Left cardiac atrium (tissue), 4 donors: ENCODE measurements at regions of chr16 and their contacts with region 1.

Region 1: GRCh38 chr16:57300387-57301125 is 16.1 kb upstream of the PLLP start:
- DNase-seq: peak; percentile 99
- ATAC-seq: peak; percentile 92 to 94

Region 2: DNA sequence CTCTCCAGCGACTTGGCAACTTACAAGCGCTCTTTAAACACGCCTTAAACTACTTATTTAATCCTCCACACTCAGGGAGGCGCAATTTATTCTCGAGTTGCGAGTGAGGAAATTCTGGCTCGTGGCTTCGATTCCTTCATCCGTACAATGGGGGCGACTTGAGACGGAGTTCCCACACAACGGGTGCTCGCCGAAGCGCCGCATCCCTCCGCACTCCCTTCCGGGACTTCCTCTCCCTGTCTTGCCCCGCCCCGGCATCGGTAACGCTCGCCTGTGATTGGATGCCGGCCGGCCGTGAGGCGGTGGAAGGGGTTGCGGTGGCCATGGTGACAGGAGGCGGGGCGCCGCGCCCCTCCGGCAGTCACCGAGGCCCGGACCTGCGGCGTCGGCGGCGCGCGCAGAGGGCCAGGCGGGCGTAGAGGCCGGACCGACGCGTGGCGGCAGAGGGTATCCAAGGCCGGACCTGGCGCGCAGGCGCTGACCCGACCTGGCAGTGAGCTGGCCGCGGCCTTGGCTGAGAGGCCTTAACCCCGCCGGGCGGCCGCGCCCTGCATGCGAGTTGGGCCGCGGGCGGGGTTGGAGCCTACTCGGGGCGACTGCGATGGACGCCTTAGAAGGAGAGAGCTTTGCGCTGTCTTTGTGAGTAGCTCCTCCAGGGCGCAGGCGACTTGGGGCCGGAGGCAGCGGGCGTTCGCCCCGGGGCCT is 55.6 kb before region 1 on chr16 and contains the start of gene ARL2BP:
- intact Hi-C with region 1: loop called in 1 of 2 experiments (anchors 2 kb)
- DNase-seq: peak; percentile 99
- ATAC-seq: peak; percentile 98 to 99
- total RNA-seq, gene ARL2BP: 52.3 to 60.3 TPM

Region 3: DNA sequence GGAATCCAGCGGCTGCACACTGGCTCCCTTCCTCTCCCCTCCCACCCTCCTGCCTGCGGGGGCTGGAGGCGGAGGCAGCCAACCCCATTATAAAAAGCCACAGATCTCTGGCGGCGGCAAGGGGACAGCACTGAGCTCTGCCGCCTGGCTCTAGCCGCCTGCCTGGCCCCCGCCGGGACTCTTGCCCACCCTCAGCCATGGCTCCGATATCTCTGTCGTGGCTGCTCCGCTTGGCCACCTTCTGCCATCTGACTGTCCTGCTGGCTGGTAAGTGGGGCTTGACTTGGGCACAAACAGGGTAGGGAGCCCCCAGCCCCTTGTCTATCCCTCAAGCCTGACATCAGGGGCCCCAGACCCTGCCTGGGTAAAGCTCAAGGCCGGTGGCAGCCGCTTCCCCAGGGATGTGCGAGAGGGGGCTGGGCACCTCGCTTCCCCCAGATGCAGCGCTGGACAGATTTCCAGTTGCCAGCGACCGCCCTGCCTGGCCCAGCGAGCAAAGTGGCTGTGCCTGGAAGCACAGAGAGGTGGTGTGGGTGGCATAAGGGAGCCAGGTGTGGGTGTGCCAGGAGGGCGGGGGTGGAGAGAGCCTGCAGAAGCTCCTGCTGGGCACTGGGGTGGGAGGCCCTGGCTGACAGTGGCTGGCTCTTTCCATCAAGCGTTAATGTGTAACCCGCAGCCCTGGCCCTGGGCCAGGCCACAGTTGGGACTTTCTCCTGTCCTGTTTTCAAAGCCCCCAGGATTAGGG is 72.0 kb after region 1 on chr16 and contains the start of gene CX3CL1:
- intact Hi-C with region 1: loop called in 1 of 2 experiments (anchors 10 kb)
- DNase-seq: peak; percentile 77
- ATAC-seq: peak; percentile 79 to 92
- total RNA-seq, gene CX3CL1: 13.7 to 23.2 TPM

Region 4: GRCh38 chr16:57413301-57413730 is 112.8 kb after region 1 on chr16:
- intact Hi-C with region 1: loop called (anchors 1 to 5 kb)
- DNase-seq: no peak
- ATAC-seq: no peak

Region 5: GRCh38 chr16:57422026-57422944 is 121.7 kb after region 1 on chr16:
- intact Hi-C with region 1: loop called (anchors 1 to 5 kb)
- DNase-seq: peak; percentile 62
- ATAC-seq: peak; percentile 60 to 78

Region 6: GRCh38 chr16:57519796-57520360 is 219.3 kb after region 1 on chr16:
- intact Hi-C with region 1: loop called (anchors 5 kb)
- DNase-seq: peak; percentile 84
- ATAC-seq: peak; percentile 82 to 84

Region 7: GRCh38 chr16:57600048-57600835 is 299.7 kb after region 1 on chr16:
- intact Hi-C with region 1: no loop called
- DNase-seq: peak; percentile 59
- ATAC-seq: peak; percentile 78 to 90

Region 8: GRCh38 chr16:58793366-58793765 is 1492.8 kb after region 1 on chr16:
- intact Hi-C with region 1: no loop called
- DNase-seq: no peak
- ATAC-seq: no peak